Calu3 (cell line): ENCODE measurements at regions of chr11 and their contacts with region 1.

Region 1: GRCh38 chr11:13772223-13773046 is 104.0 kb downstream of the FAR1 start:
- DNase-seq: peak; percentile 49
- H3K4me3 Mint-ChIP-seq: no peak overlapping the region
- H3K27ac Mint-ChIP-seq: no peak overlapping the region
- H3K4me1 Mint-ChIP-seq: no peaks in the 10 kb centered on the region
- H3K27me3 Mint-ChIP-seq: peaks cover 56% of the 10 kb centered on the region
- CTCF ChIP-seq: peak; percentile 67

Region 2: DNA sequence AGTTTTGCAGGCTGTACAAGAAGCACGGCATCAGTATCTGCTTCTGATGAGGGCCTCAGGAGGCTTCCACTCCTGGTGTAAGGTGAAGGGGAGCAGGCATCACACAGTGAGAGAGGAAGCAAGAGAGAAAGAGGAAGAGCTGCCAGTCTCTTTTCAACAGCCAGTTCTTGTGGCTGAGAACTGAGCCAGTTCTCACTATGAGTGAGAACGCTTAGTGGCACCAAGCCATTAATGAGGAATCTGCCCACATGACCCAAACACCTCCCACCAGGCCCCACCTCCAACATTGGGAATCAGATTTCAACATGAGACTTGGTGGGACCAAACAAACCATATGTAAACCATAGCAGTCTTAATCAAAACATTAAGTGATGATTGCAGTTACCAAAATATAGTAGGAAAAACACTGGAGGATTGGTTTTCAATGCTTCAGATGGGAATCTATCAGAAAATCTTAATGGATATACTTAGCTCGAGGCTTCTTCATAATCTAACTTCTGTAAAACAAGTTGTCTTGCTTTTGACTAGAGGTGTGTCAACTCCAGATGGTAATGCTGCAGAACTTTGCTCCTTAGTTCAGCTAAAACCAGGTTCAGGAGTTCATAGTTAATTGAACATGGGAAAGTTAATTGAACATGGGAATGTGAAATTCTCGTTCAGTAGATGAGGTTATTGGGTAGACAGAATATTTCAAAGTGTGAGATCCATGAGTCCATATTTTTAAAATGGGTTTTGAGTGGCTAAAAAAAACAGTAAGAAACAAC is 91.8 kb before region 1 on chr11:
- CTCF ChIA-PET with region 1: no interaction called
- intact Hi-C with region 1: no loop called
- DNase-seq: no peak
- H3K4me3 Mint-ChIP-seq: no peak overlapping the region
- H3K27ac Mint-ChIP-seq: no peak overlapping the region
- H3K4me1 Mint-ChIP-seq: peaks cover 33% of the 10 kb centered on the region
- H3K27me3 Mint-ChIP-seq: no peaks in the 10 kb centered on the region
- CTCF ChIP-seq: no peak

Region 3: GRCh38 chr11:13949876-13950275 is 177.4 kb after region 1 on chr11:
- CTCF ChIA-PET with region 1: interaction called, 3 read pairs
- intact Hi-C with region 1: loop called (anchors 2 kb)
- DNase-seq: no peak
- H3K4me3 Mint-ChIP-seq: no peak overlapping the region
- H3K27ac Mint-ChIP-seq: no peak overlapping the region
- H3K4me1 Mint-ChIP-seq: no peaks in the 10 kb centered on the region
- H3K27me3 Mint-ChIP-seq: peaks cover 23% of the 10 kb centered on the region
- CTCF ChIP-seq: no peak

Region 4: DNA sequence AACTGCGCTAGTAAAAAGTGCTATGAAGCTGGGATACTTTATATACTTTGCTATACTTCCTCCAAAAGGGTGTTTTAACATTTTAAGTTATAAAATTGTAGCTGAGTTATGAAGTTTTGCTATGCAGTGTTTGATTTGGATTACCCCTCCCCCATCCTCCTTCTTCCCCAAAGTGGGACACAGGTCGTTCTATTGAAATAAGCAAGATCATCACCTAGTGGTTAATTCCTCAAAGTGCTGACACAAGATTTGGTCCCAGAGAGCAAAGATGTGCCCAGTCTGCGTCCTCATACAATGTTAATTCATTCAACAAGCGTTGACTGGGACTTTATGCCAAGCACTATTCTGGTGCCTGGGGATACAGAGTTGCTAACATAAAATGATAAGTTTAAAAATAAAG is 268.6 kb after region 1 on chr11:
- CTCF ChIA-PET with region 1: no interaction called
- intact Hi-C with region 1: loop called (anchors 10 kb)
- DNase-seq: no peak
- H3K4me3 Mint-ChIP-seq: no peak overlapping the region
- H3K27ac Mint-ChIP-seq: no peak overlapping the region
- H3K4me1 Mint-ChIP-seq: no peaks in the 10 kb centered on the region
- H3K27me3 Mint-ChIP-seq: peaks cover 36% of the 10 kb centered on the region
- CTCF ChIP-seq: peak; percentile 49

Region 5: GRCh38 chr11:14249121-14249963 is 476.9 kb after region 1 on chr11:
- CTCF ChIA-PET with region 1: interaction called, 4 read pairs
- intact Hi-C with region 1: loop called (anchors 1 kb)
- DNase-seq: peak; percentile 54
- H3K4me3 Mint-ChIP-seq: no peak overlapping the region
- H3K27ac Mint-ChIP-seq: no peak overlapping the region
- H3K4me1 Mint-ChIP-seq: peaks cover 1% of the 10 kb centered on the region
- H3K27me3 Mint-ChIP-seq: peaks cover 31% of the 10 kb centered on the region
- CTCF ChIP-seq: peak; percentile 77